ENCODE measurements at regions of chr17 and their contacts with region 1.

Region 1: DNA sequence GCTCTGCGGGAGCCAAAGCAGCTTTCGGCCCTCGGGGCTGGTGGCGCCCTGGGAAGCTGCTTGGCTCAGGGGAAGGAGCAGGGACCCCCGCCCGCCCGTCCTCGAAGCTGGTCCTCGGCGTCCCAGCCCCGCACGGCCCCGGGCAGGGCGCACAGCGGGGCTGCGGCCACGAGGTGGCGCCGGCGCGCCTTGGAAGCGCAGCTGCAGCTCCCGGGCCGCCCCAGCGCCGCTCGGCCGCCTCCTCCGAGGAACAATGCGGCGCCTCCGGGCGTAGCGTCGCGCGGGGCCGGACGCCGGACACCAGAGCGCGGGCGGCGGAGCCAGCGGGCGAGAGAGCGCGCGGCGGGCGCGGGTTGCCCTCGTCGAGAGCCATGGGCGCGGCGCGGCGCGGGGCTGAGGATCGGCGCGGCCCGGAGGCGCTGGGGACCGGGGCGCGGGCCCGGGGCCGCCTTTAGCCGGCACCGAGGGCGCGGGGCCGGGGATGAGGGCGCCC is at the start of gene MGAT5B:
- DNase-seq: no peak
- H3K4me3 ChIP-seq: no peak within 1 kb of the TSS; the same call in 1 of the 2 replicates
- H3K27me3 ChIP-seq: peaks cover 10% of the 10 kb centered on the region
- CTCF ChIP-seq: peak; percentile 19; the same call in 1 of the 2 replicates
- polyA plus RNA-seq, gene MGAT5B: 0.23 and 0.58 TPM in 2 replicates

Region 2: DNA sequence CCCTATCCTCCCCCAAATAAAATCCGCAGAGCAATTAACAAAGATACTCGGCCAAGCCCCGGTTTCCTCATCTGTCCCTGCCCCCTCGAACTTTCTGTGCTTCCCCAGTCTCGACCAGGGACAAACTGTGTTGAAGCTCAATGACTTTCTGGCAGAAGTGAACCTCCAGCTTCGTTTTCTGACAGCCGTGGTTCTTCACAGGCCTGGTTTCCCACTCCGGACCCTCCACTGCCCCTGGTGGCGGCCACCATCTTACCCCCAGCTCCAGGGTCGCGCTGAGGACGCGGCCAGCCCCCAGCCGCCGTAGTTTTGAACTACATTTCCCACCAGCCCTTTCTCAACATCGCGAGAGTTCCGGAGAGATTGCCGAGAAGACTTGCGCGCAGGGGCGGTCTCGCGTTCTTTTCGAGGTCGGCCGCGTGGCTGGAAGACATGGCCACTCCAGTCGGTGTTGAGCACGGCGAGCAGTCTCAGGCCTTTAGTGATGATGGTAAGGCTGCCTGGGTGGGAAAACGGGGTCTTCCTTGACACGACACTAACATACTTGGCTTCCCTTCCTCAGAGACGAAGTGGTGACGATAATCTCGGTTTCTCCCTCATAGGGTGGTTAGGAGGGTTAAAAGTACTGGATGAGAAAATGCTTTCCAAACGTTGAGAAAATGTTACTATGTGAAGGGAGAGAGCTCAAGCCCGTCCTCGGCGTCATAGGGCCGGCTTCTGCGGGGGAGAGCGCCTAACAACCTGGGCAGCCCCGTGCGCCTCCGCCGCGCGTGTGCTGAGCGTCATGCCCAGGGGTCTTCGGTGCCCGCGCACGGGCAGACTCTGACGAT is 310.6 kb before region 1 on chr17:
- CTCF ChIA-PET with region 1: no interaction called
- POLR2A ChIA-PET with region 1: no interaction called
- DNase-seq: peak; percentile 70
- H3K4me3 ChIP-seq: peak overlapping the region; percentile 92
- H3K27me3 ChIP-seq: no peaks in the 10 kb centered on the region
- CTCF ChIP-seq: peak; percentile 74

Region 3: DNA sequence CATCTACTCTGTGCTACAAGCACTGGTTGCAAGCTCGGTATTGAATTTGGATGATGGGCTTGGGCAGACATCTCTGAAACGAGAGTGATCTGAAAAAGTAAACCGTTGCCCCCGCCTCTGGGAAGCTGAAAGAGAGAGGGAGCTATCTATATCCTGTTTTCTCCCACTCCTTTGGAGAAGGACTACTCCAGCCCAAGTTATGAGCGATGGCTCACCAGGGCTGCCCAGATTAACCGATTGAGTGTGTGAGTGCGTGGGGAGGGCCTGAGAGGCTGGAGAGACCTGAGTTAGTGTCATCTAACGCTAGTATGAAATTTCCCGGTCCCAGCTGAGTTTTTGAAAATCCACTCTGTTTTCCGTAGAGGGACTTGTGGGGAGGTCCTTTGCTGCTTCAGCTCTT is 11.5 kb after region 1 on chr17:
- CTCF ChIA-PET with region 1: interaction called, 12 read pairs
- POLR2A ChIA-PET with region 1: no interaction called
- DNase-seq: no peak
- H3K4me3 ChIP-seq: no peak overlapping the region
- H3K27me3 ChIP-seq: peaks cover 2% of the 10 kb centered on the region; the same call in 1 of the 2 replicates
- CTCF ChIP-seq: no peak

Region 4: DNA sequence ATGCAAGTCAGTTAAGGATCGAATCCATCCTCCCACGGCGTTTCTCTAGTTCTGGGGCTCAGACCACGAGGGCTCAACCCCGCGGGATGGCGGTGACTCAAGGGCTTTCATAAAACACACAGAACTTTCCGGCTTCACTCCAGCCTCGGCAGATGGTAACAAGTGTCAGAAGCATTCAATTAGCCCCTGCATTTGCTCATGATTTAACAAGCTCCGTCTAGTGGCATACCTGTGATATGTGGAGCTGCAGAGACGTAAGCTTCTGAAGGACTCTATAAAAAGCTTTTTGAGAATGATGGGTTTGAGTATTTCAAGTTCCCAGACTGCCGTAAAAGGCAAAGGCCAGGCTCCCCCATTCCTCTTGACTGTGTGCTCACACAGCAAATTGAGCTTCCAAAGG is 181.2 kb after region 1 on chr17:
- CTCF ChIA-PET with region 1: interaction called, 12 read pairs
- POLR2A ChIA-PET with region 1: no interaction called
- DNase-seq: no peak
- H3K4me3 ChIP-seq: no peak overlapping the region
- H3K27me3 ChIP-seq: peaks cover 41% of the 10 kb centered on the region
- CTCF ChIP-seq: no peak

Region 5: GRCh38 chr17:77068915-77069314 is 200.7 kb after region 1 on chr17:
- CTCF ChIA-PET with region 1: interaction called, 41 read pairs
- POLR2A ChIA-PET with region 1: no interaction called
- DNase-seq: no peak
- H3K4me3 ChIP-seq: no peak overlapping the region
- H3K27me3 ChIP-seq: peaks cover 24% of the 10 kb centered on the region
- CTCF ChIP-seq: no peak

Measured in BJ (cell line).